ENCODE measurements at regions of chr5 and their contacts with region 1.

Region 1: GRCh38 chr5:81301271-81302015 is at the start of gene ZCCHC9:
- DNase-seq: peak; percentile 97
- ATAC-seq: peak; percentile 90
- H3K4me3 Mint-ChIP-seq: peak within 1 kb of the TSS; percentile 86
- H3K27ac Mint-ChIP-seq: peak within 1 kb of the TSS; percentile 97
- H3K4me1 Mint-ChIP-seq: peaks cover 57% of the 10 kb centered on the region
- H3K27me3 Mint-ChIP-seq: no peaks in the 10 kb centered on the region
- total RNA-seq, gene ZCCHC9: 44.3 to 45.5 TPM

Region 2: DNA sequence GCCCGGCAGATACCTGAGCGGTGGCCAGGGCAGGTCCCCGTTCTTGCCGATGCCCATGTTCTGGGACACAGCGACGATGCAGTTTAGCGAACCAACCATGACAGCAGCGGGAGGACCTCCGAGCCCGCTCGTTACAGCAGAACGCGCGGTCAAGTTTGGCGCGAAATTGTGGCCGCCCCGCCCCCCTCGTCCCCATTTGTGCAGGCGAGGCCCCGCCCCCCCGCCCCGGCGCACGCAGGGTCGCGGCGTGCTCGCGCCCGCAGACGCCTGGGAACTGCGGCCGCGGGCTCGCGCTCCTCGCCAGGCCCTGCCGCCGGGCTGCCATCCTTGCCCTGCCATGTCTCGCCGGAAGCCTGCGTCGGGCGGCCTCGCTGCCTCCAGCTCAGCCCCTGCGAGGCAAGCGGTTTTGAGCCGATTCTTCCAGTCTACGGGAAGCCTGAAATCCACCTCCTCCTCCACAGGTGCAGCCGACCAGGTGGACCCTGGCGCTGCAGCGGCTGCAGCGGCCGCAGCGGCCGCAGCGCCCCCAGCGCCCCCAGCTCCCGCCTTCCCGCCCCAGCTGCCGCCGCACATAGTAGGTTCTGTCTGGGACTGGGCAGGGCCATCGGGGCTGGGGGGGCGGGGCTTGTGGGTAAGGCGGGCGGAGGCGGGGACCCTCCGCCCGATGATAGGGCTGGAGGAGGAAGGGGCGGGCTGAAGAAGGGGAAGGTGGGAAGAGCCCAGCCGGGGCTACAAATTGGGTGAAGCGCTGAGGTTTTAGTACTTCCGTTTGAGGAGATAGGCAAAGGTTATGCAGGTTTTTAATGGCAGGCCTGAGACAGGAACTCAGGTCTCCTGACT is 646.8 kb before region 1 on chr5 and contains the starts of genes DHFR and MSH3:
- CTCF ChIA-PET with region 1: no interaction called
- POLR2A ChIA-PET with region 1: no interaction called
- intact Hi-C with region 1: loop called in 1 of 2 experiments (anchors 1 kb)
- DNase-seq: peak; percentile 95
- ATAC-seq: peak; percentile 69
- H3K4me3 Mint-ChIP-seq: peak within 1 kb of the TSS; percentile 94
- H3K27ac Mint-ChIP-seq: peak within 1 kb of the TSS; percentile 99
- H3K4me1 Mint-ChIP-seq: peaks cover 21% of the 10 kb centered on the region
- H3K27me3 Mint-ChIP-seq: no peaks in the 10 kb centered on the region
- total RNA-seq, gene DHFR: 105 to 107 TPM
- total RNA-seq, gene MSH3: 25.6 to 27.1 TPM

Region 3: DNA sequence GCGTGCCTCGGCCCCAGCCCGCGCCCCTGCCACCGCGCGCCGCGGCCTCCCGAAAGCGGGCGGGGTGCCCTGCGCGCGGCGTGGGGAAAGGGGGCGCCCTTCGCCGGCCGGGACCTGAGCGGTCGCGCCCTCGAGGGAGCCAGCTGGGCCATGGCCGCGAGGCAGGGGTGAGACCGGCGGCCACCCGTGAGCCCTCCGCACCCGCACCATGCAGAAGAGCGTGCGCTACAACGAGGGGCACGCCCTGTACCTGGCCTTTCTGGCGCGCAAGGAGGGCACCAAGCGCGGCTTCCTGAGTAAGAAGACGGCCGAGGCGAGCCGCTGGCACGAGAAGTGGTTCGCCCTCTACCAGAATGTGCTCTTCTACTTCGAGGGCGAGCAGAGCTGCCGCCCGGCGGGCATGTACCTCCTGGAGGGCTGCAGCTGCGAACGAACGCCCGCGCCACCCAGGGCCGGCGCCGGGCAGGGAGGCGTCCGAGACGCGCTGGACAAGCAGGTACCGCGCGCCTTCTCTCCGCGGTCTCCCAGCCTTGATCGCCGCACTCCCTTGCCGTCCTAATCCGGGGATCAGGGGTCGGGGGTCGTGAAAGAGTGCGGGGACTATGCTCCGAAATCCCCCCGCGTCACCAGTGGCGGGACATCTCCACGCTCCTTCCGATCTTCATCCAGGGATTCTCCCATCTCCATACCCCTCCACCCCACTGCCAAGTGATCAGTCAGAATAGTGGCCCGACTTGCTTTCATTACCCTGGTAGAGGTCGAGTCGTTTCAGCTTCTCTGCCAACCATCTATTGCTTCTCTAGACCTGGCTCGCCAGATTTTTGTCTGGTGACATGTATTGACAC is 340.7 kb before region 1 on chr5:
- CTCF ChIA-PET with region 1: no interaction called
- POLR2A ChIA-PET with region 1: no interaction called
- intact Hi-C with region 1: loop called in 1 of 2 experiments (anchors 5 kb)
- DNase-seq: peak; percentile 69
- ATAC-seq: peak; percentile 42
- H3K4me3 Mint-ChIP-seq: peak overlapping the region; percentile 83
- H3K27ac Mint-ChIP-seq: peak overlapping the region; percentile 86
- H3K4me1 Mint-ChIP-seq: peaks cover 74% of the 10 kb centered on the region
- H3K27me3 Mint-ChIP-seq: peaks cover 5% of the 10 kb centered on the region

Region 4: DNA sequence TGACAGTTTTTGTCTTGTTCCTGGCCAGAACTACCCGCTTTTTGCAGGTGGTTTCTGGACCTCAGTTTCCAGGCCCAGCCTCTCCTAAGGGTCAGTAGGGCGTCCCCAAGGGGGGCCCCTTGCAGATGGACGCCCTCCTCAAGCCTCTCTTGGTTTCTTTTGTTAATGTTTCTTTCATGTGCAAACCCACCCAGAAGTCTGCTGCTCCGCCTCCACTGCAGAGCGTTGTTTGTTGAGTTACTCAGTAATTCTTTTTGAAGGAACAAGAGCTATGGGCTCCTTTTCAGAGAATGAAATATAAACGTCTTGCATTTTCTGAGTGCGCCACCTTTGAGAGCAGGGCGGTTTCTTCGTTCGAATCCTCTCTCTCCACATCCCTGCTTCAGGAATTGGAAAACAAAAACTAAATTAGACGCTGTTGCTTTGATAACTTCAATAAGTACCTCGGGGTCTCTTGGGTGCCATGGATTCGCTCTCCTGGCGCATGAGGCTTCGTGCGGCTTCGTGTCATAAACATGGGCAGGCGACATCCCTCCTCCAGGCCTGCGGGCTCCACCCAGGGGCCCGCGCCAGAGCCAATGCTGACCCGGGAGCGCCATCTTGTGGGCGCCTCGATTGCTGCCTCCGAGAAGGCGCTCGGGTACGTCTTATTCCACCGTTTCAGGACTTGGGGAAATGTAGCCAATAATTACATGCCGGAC is 106.7 kb before region 1 on chr5:
- CTCF ChIA-PET with region 1: interaction called, 4 read pairs
- POLR2A ChIA-PET with region 1: no interaction called
- intact Hi-C with region 1: loop called in 1 of 2 experiments (anchors 5 kb)
- DNase-seq: peak; percentile 92
- ATAC-seq: peak; percentile 99
- H3K4me3 Mint-ChIP-seq: peak overlapping the region; percentile 15
- H3K27ac Mint-ChIP-seq: no peak overlapping the region
- H3K4me1 Mint-ChIP-seq: peaks cover 9% of the 10 kb centered on the region
- H3K27me3 Mint-ChIP-seq: no peaks in the 10 kb centered on the region

Region 5: GRCh38 chr5:81751009-81751835 is 449.8 kb after region 1 on chr5 and contains the start of gene SSBP2:
- CTCF ChIA-PET with region 1: no interaction called
- POLR2A ChIA-PET with region 1: no interaction called
- intact Hi-C with region 1: loop called in 1 of 2 experiments (anchors 2 kb)
- DNase-seq: peak; percentile 98
- ATAC-seq: peak; percentile 91
- H3K4me3 Mint-ChIP-seq: peak within 1 kb of the TSS; percentile 89
- H3K27ac Mint-ChIP-seq: peak within 1 kb of the TSS; percentile 78
- H3K4me1 Mint-ChIP-seq: peaks cover 33% of the 10 kb centered on the region
- H3K27me3 Mint-ChIP-seq: no peaks in the 10 kb centered on the region
- total RNA-seq, gene SSBP2: 16.9 to 21.4 TPM

Region 6: GRCh38 chr5:81971712-81972495 is 670.5 kb after region 1 on chr5 and contains the start of gene ATG10:
- CTCF ChIA-PET with region 1: no interaction called
- POLR2A ChIA-PET with region 1: no interaction called
- intact Hi-C with region 1: loop called (anchors 5 kb)
- DNase-seq: peak; percentile 93
- ATAC-seq: peak; percentile 95
- H3K4me3 Mint-ChIP-seq: peak within 1 kb of the TSS; percentile 96
- H3K27ac Mint-ChIP-seq: peak within 1 kb of the TSS; percentile 99
- H3K4me1 Mint-ChIP-seq: peaks cover 22% of the 10 kb centered on the region
- H3K27me3 Mint-ChIP-seq: no peaks in the 10 kb centered on the region
- total RNA-seq, gene ATG10: 4.7 to 8.1 TPM

Region 7: GRCh38 chr5:82278095-82278918 is 976.9 kb after region 1 on chr5 and contains the start of gene RPS23:
- CTCF ChIA-PET with region 1: no interaction called
- POLR2A ChIA-PET with region 1: no interaction called
- intact Hi-C with region 1: loop called in 1 of 2 experiments (anchors 2 kb)
- DNase-seq: peak; percentile 93
- ATAC-seq: peak; percentile 95
- H3K4me3 Mint-ChIP-seq: peak within 1 kb of the TSS; percentile 86
- H3K27ac Mint-ChIP-seq: peak within 1 kb of the TSS; percentile 99
- H3K4me1 Mint-ChIP-seq: peaks cover 46% of the 10 kb centered on the region
- H3K27me3 Mint-ChIP-seq: no peaks in the 10 kb centered on the region
- total RNA-seq, gene RPS23: 2,831 to 3,226 TPM

Measured in activated CD4-positive, alpha-beta T cell treated with anti-CD3 and anti-CD28 coated beads for 36 hours (primary cell).